ENCODE measurements at regions of chr14 and their contacts with region 1.

Region 1: DNA sequence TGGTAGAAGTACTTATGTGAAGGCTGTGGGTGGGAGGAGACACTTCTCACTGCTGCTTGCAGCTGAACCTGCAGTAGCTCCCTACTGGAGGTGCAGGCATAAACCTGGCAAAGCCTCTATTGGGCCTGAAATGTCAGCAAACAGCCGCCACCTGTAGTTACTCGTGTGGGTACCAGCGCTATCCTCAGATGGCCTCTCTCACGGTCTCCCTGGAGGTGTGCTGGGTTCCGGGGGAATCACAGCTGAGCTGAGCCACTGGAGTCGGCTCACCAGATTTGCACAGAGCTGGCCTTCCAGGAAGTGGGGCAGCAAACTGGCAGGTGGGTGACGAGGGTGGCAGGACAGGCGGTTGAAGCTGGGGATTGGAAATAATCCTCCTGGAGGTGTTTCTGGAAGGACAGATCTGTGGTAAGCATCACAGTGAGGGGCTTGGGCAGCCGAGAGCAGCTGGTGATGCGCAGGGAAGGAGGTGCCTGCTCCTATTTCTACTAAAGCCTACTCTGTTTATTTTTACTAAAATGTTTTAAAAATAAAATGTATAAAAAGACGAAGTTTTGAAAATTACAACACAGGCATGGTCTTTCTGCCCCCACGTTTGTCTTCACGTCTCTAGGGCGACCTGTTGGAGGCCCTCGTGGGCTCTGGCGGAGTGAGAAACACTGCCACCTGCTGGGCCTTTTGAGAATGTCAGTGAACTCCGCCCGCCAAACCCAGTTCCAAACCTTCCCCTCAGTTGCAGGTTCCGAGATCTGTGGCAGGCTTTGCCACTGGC is 67.8 kb upstream of the PLEKHG3 start:
- DNase-seq: peak; percentile 66 to 67
- ATAC-seq: peak; percentile 77 to 93 (median 92)
- H3K4me3 ChIP-seq: no peak overlapping the region
- H3K27ac ChIP-seq: no peak overlapping the region
- H3K4me1 ChIP-seq: peaks cover 0 to 11% (median 0%) of the 10 kb centered on the region in 9 donors
- H3K27me3 ChIP-seq: no peaks in the 10 kb centered on the region
- CTCF ChIP-seq: peak; percentile 79 to 95 (median 90)

Region 2: DNA sequence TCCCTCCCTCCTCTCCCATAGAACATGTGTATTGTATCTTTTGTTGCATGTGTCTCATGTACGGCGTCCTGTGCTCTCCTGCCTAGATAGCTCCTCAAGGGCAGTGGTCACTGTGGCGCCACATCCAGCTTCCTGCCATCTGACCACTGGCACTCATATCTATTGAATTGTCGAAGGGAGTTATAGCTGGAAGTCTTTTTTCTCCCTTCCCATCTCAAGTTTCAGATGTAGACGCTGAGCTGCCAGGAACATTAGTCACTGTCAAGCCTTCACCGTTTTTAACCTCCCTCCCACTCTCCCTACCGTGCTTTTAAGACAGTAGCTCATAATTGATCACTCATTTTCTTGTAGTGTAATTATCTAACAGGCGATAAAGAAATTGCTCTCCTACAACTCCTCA is 215.2 kb before region 1 on chr14:
- intact Hi-C with region 1: loop called in 1 of 10 experiments (anchors 5 kb)
- DNase-seq: no peak
- ATAC-seq: no peak
- H3K4me3 ChIP-seq: no peak overlapping the region
- H3K27ac ChIP-seq: no peak overlapping the region
- H3K4me1 ChIP-seq: peaks cover 0 to 11% (median 0%) of the 10 kb centered on the region in 9 donors
- H3K27me3 ChIP-seq: no peaks in the 10 kb centered on the region
- CTCF ChIP-seq: no peak

Region 3: GRCh38 chr14:64438181-64438841 is 198.1 kb before region 1 on chr14:
- intact Hi-C with region 1: loop called in 2 of 10 experiments (anchors 5 to 10 kb)
- DNase-seq: no peak
- ATAC-seq: no peak
- H3K4me3 ChIP-seq: no peak overlapping the region
- H3K27ac ChIP-seq: no peak overlapping the region
- H3K4me1 ChIP-seq: peaks cover 0 to 14% (median 10%) of the 10 kb centered on the region in 9 donors
- H3K27me3 ChIP-seq: no peaks in the 10 kb centered on the region
- CTCF ChIP-seq: no peak

Region 4: DNA sequence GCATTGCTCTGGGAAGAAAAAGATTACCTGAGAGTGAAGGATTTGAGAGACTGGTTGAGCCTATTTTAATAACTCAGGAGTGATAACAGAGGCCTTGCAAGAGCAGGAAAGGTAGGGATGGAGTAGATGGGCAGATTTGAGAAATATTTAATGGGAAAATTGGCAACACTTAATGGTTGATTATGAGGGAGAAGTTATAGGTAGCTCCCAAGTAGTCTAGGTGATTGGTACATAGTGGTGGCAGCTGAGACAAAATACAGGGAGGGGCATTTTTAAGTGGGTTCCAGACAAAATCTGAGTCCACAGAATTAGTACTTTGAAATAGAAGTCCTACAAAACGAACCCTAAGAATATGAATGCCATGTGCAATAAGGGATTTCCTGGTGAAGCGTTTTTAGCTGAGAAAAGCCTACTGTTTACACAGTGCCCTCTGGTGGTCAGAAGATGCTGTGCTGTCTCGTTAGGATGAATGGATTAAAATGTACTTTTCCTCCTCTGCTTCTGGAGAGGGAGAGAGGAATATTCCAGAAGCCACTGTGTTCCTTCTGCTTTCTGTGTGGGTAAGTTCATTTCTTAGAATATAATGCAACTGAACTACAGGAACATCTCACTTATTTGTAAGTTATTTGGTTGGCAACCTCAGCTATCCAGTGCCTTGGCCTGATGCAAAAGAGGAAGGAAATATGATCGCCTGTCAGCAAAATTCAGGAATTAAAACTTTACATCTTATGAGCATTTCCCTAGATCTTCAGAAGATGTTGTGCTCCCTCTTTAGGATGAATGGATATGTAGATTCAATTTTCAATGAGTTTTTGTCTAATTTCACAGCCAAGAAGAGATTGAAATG is 125.3 kb before region 1 on chr14:
- intact Hi-C with region 1: loop called in 2 of 10 experiments (anchors 10 kb)
- DNase-seq: peak in 1 of 2 donors; percentile 69
- ATAC-seq: peak in 7 of 8 donors; percentile 36 to 80 (median 71)
- H3K4me3 ChIP-seq: no peak overlapping the region
- H3K27ac ChIP-seq: peak overlapping the region in 6 of 10 donors; percentile 1 to 57 (median 18)
- H3K4me1 ChIP-seq: peaks cover 9 to 93% (median 77%) of the 10 kb centered on the region in 9 donors
- H3K27me3 ChIP-seq: no peaks in the 10 kb centered on the region
- CTCF ChIP-seq: peak; percentile 73 to 92 (median 90)

Region 5: GRCh38 chr14:64540208-64541157 is 95.9 kb before region 1 on chr14 and contains the start of gene HSPA2:
- intact Hi-C with region 1: loop called (anchors 2 to 10 kb)
- DNase-seq: peak; percentile 99
- ATAC-seq: peak; percentile 97 to 99 (median 98)
- H3K4me3 ChIP-seq: peak within 1 kb of the TSS; percentile 41 to 75 (median 70)
- H3K27ac ChIP-seq: peak within 1 kb of the TSS; percentile 12 to 84 (median 82)
- H3K4me1 ChIP-seq: peaks cover 0 to 35% (median 16%) of the 10 kb centered on the region in 9 donors
- H3K27me3 ChIP-seq: peaks cover 0 to 44% (median 4%) of the 10 kb centered on the region in 7 donors
- CTCF ChIP-seq: peak; percentile 63 to 99 (median 89)
- total RNA-seq, gene HSPA2: 9.4 to 77.6 (median 34.8) TPM

Region 6: GRCh38 chr14:64569184-64569631 is 67.2 kb before region 1 on chr14:
- intact Hi-C with region 1: no loop called
- DNase-seq: peak; percentile 48 to 57
- ATAC-seq: peak; percentile 85 to 99 (median 94)
- H3K4me3 ChIP-seq: no peak overlapping the region
- H3K27ac ChIP-seq: peak overlapping the region; percentile 27 to 88 (median 60)
- H3K4me1 ChIP-seq: peaks cover 0 to 49% (median 20%) of the 10 kb centered on the region in 9 donors
- H3K27me3 ChIP-seq: no peaks in the 10 kb centered on the region
- CTCF ChIP-seq: no peak